ENCODE measurements at regions of chr1 and their contacts with region 1.

Region 1: GRCh38 chr1:108590957-108591356 is 31.1 kb downstream of the EEIG2 start:
- DNase-seq: no peak
- ATAC-seq: peak; percentile 79
- H3K4me3 Mint-ChIP-seq: no peak overlapping the region
- H3K27ac Mint-ChIP-seq: no peak overlapping the region
- H3K4me1 Mint-ChIP-seq: peaks cover 63% of the 10 kb centered on the region
- H3K27me3 Mint-ChIP-seq: no peaks in the 10 kb centered on the region

Region 2: DNA sequence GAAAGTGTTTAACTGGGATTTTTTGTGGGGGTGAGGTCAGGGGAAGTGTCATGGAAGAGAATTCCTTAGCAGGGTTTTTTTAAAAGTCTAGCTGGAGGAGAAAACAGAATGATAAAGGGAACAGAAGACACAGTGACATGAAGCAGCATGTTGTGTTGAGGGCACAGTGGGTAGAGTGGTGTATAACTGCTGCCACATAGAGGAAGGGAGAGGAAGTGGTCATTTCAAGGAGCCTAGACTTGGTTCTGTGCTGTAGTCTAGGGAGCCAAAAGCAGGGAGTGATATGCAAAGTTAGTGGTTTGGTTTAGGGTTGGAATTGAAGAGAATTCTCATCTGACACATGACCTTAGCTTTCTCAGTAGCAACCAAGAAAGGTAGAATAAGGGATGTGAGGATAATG is 20.8 kb before region 1 on chr1:
- CTCF ChIA-PET with region 1: interaction called, 8 read pairs
- POLR2A ChIA-PET with region 1: no interaction called
- intact Hi-C with region 1: loop called in 1 of 2 experiments (anchors 2 kb)
- DNase-seq: peak; percentile 38
- ATAC-seq: peak; percentile 99
- H3K4me3 Mint-ChIP-seq: no peak overlapping the region
- H3K27ac Mint-ChIP-seq: no peak overlapping the region
- H3K4me1 Mint-ChIP-seq: peaks cover 5% of the 10 kb centered on the region
- H3K27me3 Mint-ChIP-seq: no peaks in the 10 kb centered on the region

Measured in activated CD4-positive, alpha-beta T cell treated with anti-CD3 and anti-CD28 coated beads for 36 hours (primary cell).